ENCODE measurements at regions of chr3 and their contacts with region 1.

Region 1: DNA sequence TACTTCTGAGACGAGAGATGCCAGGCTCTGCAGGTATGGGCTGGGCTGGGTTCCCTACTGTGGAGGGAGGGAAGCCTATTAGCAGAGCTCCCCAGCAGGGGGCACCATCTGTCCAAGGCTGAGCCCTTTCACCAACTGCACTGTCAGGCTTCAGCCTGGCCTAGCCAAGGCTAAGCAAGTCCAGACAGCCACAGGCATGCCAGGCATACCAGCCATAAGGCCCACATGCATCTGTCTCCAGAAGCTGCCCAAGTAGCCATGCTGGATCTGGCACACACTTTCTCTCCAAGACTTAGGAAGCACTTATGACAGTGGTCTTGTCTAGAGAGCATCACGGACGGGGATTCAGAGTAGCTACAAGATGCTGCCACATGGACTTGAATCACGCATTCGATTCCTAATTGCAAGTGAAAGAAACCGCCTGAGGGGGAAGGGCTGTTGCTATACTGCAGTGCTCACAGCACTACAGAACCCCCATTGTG is 28.3 kb downstream of the RUVBL1 start:
- DNase-seq: peak; percentile 73 to 80 (median 76)
- H3K4me3 ChIP-seq: no peak overlapping the region
- H3K4me3 Mint-ChIP-seq: no peak overlapping the region
- H3K27ac ChIP-seq: no peak overlapping the region
- H3K27ac Mint-ChIP-seq: peak overlapping the region in 4 of 7 donors; percentile 45 to 66 (median 54)
- H3K4me1 ChIP-seq: no peaks in the 10 kb centered on the region
- H3K4me1 Mint-ChIP-seq: peaks cover 3 to 6% (median 5%) of the 10 kb centered on the region in 4 donors
- H3K27me3 ChIP-seq: no peaks in the 10 kb centered on the region
- H3K27me3 Mint-ChIP-seq: no peaks in the 10 kb centered on the region

Region 2: DNA sequence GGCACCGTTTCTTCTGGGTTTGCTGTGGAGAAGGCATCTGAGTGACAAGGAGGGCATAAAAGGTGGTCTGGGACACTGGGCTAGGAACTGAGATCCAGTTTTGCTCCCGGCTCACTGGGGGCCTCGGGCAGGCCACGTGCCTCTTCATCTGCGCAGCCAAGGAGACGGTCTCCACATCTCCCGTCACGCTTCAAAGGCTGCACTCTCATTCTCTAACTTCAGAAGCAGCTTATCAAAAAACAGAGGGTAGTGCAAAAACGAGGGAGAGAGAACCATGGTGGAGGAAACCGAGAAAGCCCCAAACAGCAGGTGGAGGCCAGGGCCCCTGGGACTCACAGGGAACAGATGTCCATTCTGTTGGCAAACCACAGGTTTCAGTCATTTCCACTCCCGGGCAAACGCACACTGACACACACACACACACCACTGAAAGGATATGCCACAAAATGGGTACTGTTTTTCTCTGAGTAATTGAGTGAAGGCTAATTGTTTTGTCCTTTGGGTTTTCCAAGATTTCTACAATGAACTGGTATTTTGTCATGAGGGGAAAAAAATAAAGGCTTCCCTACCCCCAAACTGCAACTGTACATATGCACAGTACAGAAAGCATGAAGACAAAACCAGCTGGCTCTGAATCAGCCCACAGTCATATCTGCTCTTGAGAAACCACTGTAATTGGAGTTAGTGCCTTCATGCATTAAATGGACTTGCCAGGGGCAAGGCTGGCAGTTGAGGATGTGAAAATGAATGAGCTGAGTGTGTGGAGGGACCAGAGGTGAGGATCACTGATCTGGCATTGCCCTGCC is 344.8 kb before region 1 on chr3:
- CTCF ChIA-PET with region 1: no interaction called
- POLR2A ChIA-PET with region 1: no interaction called
- intact Hi-C with region 1: no loop called
- DNase-seq: no peak
- H3K4me3 ChIP-seq: no peak overlapping the region
- H3K4me3 Mint-ChIP-seq: no peak overlapping the region
- H3K27ac ChIP-seq: no peak overlapping the region
- H3K27ac Mint-ChIP-seq: no peak overlapping the region
- H3K4me1 ChIP-seq: peaks cover 7% of the 10 kb centered on the region
- H3K4me1 Mint-ChIP-seq: peaks cover 0 to 6% (median 2%) of the 10 kb centered on the region in 4 donors
- H3K27me3 ChIP-seq: no peaks in the 10 kb centered on the region
- H3K27me3 Mint-ChIP-seq: peaks cover 8% of the 10 kb centered on the region in 2 donors

Region 3: DNA sequence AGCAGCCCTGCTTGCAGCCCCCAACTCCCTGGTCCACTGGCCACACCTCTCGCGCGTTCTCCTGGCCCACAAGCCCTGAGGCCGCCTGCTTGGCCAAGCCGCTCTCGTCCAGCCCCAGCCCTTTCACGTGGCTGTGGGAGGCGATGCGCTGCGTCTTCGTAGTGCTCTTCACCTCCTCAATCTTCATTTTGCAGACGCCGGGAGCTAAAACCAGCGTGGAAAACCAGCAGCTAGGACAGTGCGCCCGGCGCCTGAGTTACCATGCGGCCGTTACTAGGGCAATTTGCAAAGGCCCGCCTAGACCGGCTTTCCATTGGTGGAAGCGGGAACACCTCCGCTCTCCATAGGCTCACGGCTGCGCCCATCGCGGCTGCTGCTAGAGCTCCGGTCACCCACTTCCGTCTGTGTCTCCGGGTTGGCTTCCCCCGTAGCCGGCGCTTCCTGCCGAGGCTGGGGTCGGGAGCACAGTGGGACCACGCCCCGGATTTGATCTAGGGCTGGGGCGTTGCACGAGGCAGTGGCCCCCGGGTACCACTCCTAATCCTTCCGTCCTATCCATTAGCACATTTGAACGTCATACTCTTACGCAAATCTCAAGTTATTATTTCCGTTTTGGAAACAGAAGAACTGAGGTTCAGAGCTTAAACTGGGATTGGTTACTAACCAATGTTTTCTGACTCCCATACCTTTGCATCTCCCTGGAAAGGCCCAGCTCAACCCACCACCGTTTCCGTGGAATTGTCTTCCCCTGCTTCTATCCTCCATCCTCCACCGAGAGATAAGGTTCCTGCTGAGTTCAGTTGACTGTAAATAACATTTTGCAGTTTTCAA is 28.5 kb after region 1 on chr3 and contains the start of gene RUVBL1:
- CTCF ChIA-PET with region 1: interaction called, 48 read pairs
- POLR2A ChIA-PET with region 1: interaction called, 11 read pairs
- intact Hi-C with region 1: no loop called
- DNase-seq: peak; percentile 97 to 99 (median 99)
- H3K4me3 ChIP-seq: peak within 1 kb of the TSS; percentile 68 to 96
- H3K4me3 Mint-ChIP-seq: peak within 1 kb of the TSS; percentile 94 to 98 (median 96)
- H3K27ac ChIP-seq: peak within 1 kb of the TSS; percentile 78
- H3K27ac Mint-ChIP-seq: peak within 1 kb of the TSS; percentile 91 to 99 (median 97)
- H3K4me1 ChIP-seq: peaks cover 22% of the 10 kb centered on the region
- H3K4me1 Mint-ChIP-seq: peaks cover 15 to 31% (median 27%) of the 10 kb centered on the region in 4 donors
- H3K27me3 ChIP-seq: no peaks in the 10 kb centered on the region
- H3K27me3 Mint-ChIP-seq: no peaks in the 10 kb centered on the region
- total RNA-seq, gene RUVBL1: 26.6 to 27.0 TPM

Region 4: GRCh38 chr3:128322066-128323022 is 227.1 kb after region 1 on chr3:
- CTCF ChIA-PET with region 1: interaction called, 69 read pairs
- POLR2A ChIA-PET with region 1: no interaction called
- intact Hi-C with region 1: no loop called
- DNase-seq: peak; percentile 54 to 63 (median 61)
- H3K4me3 ChIP-seq: no peak overlapping the region
- H3K4me3 Mint-ChIP-seq: no peak overlapping the region
- H3K27ac ChIP-seq: no peak overlapping the region
- H3K27ac Mint-ChIP-seq: peak overlapping the region in 5 of 7 donors; percentile 18 to 57 (median 22)
- H3K4me1 ChIP-seq: peaks cover 42% of the 10 kb centered on the region
- H3K4me1 Mint-ChIP-seq: peaks cover 9 to 63% (median 29%) of the 10 kb centered on the region in 4 donors
- H3K27me3 ChIP-seq: no peaks in the 10 kb centered on the region
- H3K27me3 Mint-ChIP-seq: no peaks in the 10 kb centered on the region

Region 5: GRCh38 chr3:128348805-128349531 is 253.7 kb after region 1 on chr3:
- CTCF ChIA-PET with region 1: no interaction called
- POLR2A ChIA-PET with region 1: no interaction called
- intact Hi-C with region 1: no loop called
- DNase-seq: no peak
- H3K4me3 ChIP-seq: no peak overlapping the region
- H3K4me3 Mint-ChIP-seq: no peak overlapping the region
- H3K27ac ChIP-seq: no peak overlapping the region
- H3K27ac Mint-ChIP-seq: peak overlapping the region in 1 of 7 donors; percentile 50
- H3K4me1 ChIP-seq: no peaks in the 10 kb centered on the region
- H3K4me1 Mint-ChIP-seq: no peaks in the 10 kb centered on the region
- H3K27me3 ChIP-seq: no peaks in the 10 kb centered on the region
- H3K27me3 Mint-ChIP-seq: no peaks in the 10 kb centered on the region

Region 6: DNA sequence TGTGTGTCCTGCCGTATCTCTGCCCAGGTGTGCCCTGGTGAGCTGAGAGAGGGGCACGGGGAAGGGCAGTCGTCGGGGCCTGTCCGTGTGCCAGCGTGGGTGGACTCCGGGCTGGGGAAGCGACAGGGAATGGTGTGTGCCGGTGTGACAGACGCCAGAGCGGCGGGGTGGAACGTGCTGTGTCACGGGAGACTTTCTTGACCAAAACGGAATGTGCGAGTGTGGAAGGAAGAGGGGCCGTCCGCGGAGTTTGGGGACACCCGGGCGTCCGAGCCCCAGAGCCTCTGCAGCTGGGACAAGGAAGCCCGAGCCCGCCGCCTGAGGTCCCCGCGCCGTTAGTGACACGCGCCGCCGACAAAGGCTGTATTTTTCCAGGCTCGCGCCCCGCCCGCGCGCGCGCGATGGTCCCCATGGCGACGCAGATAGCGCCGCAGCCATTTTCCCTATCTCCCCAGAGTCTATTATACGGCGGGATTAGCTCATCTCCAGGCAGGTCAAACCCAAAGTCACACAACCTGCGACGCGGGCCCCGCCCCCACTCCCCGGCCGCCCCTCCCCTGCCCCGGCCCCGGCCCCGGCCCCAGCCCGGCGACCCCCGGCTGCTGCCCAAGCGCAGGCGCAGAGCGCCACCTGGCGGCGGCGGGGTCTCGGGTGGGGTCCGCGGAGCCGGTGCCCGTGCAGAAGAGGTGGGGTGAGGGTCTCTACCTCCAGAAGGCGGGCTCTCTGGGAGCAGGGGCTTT is 402.3 kb after region 1 on chr3:
- CTCF ChIA-PET with region 1: interaction called, 6 read pairs
- POLR2A ChIA-PET with region 1: no interaction called
- intact Hi-C with region 1: loop called (anchors 1 kb)
- DNase-seq: peak; percentile 62 to 71 (median 66)
- H3K4me3 ChIP-seq: peak overlapping the region in 1 of 2 donors; percentile 17
- H3K4me3 Mint-ChIP-seq: peak overlapping the region; percentile 72 to 89 (median 80)
- H3K27ac ChIP-seq: no peak overlapping the region
- H3K27ac Mint-ChIP-seq: peak overlapping the region in 1 of 7 donors; percentile 47
- H3K4me1 ChIP-seq: peaks cover 9% of the 10 kb centered on the region
- H3K4me1 Mint-ChIP-seq: peaks cover 2 to 26% (median 6%) of the 10 kb centered on the region in 4 donors
- H3K27me3 ChIP-seq: peaks cover 17% of the 10 kb centered on the region
- H3K27me3 Mint-ChIP-seq: peaks cover 37 to 55% of the 10 kb centered on the region in 2 donors

Measured in CD4-positive, alpha-beta memory T cell (primary cell).